Endothelial cell of umbilical vein (primary cell): ENCODE measurements at regions of chr14 and their contacts with region 1.

Region 1: DNA sequence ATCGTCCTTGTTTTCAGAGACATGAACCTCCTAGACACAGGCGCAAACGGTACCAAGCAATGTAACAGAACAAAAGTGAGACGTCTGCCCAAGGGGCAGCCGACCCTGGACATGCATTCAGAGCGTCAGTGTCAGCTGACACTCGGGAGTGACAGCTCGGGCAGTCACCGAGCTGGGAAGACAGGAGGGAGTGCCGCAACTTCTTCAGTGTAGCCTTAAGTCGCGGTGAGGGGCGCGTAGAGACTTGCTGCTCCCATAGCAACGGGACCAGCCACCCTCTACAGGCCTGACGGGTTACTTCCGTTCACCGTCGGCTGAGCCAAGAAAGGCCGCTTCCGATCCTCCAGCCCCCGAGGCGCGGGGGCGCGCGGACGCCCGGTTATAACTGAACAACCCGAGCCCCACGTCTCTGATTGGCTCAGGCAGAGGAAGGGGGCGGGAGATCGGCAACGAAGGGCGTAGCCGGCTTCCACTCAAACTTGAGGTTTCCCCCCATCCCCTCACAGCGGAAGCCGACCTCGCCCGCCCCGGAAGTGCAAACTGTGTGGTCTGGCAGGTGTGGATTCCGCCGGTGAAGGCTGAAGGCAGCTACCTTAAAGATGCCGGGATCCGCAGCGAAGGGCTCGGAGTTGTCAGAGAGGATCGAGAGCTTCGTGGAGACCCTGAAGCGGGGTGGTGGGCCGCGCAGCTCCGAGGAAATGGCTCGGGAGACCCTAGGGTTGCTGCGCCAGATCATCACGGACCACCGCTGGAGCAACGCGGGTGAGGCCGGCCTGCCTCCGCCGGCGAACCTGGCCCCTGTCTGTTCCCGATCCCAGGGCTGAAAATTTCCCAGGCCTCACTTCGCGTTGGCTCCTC is at the start of gene EIF2B2:
- DNase-seq: peak; percentile 96
- H3K4me3 ChIP-seq: peak within 1 kb of the TSS; percentile 43 to 76 (median 59)
- H3K27ac ChIP-seq: peak within 1 kb of the TSS; percentile 64
- H3K4me1 ChIP-seq: peaks cover 26% of the 10 kb centered on the region
- H3K27me3 ChIP-seq: no peaks in the 10 kb centered on the region
- CTCF ChIP-seq: no peak
- POLR2A ChIP-seq: peak; percentile 55
- total RNA-seq, gene EIF2B2: 97.0 and 103 TPM in 2 replicates

Region 2: DNA sequence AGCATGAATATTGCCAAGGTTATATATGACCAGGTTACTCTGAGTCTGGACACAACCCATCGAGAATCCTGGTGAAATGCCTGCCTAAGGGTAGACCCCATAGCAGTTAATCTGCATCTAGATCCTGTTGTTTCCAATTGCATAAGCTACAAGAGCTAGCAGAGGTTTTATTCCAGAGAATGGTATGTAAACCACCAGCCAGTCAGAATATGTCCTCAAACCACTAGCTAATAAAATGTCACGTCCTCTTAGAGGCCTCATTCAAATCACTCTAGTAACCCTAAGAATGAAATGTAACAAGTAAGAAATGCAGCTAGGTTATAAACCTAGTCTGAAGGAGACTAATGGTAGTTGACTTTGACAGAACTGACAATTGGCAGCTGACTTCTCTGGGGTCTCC is 248.5 kb before region 1 on chr14:
- CTCF ChIA-PET with region 1: no interaction called
- POLR2A ChIA-PET with region 1: no interaction called
- dilution Hi-C with region 1: no loop called
- intact Hi-C with region 1: no loop called
- DNase-seq: no peak
- H3K4me3 ChIP-seq: no peak overlapping the region
- H3K27ac ChIP-seq: no peak overlapping the region
- H3K4me1 ChIP-seq: no peaks in the 10 kb centered on the region
- H3K27me3 ChIP-seq: no peaks in the 10 kb centered on the region
- CTCF ChIP-seq: no peak
- POLR2A ChIP-seq: no peak

Region 3: DNA sequence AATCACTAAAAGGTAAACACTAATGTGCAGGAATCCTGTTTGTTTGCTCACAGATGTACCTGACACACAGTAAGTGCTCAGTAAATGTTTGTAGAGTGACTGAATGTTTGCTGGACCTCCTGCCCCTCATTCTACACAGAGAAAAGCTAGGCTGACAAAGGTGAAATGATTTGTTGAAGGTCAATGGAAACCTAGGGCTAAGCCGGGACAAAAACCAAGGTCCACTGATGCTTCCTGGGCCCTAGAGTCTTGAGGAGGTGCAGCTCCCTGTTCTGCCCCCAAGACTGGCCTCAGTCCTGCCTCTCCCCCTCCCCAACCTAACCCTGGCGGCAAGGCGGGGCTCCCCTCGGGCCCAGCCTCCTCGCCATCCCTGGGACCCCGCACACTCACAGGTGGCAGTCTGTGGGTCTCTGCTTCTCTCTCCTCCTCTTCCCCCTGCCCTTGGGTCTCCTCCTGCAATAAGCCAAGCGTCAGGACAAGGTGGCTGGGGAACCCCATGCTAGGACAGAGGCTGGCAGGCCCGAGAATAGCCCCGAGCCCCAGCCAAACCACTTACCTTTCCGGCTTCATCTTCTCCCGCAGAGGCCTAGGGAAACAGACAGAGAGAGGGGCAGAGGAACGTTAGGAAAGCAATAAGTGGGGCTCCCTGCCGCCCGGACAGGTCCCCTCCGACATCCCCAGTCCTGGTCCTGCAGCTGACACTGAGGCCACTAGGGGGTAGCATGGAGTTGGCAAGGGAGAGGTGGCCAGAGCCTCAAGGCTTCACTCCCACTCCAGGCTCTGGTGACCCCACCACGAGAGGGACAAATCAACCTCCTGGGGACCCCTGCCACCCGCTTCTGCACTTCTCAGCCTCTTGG is 56.6 kb before region 1 on chr14:
- CTCF ChIA-PET with region 1: interaction called, 23 read pairs
- POLR2A ChIA-PET with region 1: interaction called, 3 read pairs
- dilution Hi-C with region 1: no loop called
- intact Hi-C with region 1: loop called (anchors 2 kb)
- DNase-seq: peak; percentile 69
- H3K4me3 ChIP-seq: no peak overlapping the region
- H3K27ac ChIP-seq: peak overlapping the region; percentile 30
- H3K4me1 ChIP-seq: peaks cover 39% of the 10 kb centered on the region
- H3K27me3 ChIP-seq: no peaks in the 10 kb centered on the region
- CTCF ChIP-seq: peak; percentile 80 to 96
- POLR2A ChIP-seq: no peak

Region 4: DNA sequence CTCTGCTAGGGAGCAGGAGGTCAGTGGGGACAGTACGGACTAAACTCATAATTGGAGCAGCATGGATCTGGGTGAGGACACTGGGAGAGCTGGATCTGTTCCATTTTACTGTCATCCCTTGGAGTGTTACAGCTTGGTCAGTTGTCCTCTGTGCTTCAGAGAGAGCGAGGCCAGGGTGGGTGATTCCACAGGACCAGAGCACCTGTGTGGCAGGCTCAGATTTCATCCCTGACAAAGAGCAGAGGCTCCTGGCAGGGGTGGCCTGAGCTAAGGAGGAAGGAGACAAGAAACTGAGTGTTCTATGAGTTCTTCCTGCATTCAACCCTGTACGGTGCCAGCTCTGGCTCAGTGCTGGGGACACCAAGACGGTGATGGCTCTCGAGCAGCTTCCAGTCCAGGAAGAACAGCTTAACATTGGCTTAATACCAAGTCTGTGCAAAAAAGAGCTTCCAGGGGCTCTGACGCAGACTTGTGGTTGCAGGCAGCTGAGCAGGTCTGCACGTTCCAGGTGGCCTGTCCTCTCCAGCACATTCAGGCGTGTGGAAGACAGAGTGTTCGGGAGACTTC is 38.8 kb before region 1 on chr14:
- CTCF ChIA-PET with region 1: no interaction called
- POLR2A ChIA-PET with region 1: no interaction called
- dilution Hi-C with region 1: no loop called
- intact Hi-C with region 1: loop called (anchors 1 kb)
- DNase-seq: no peak
- H3K4me3 ChIP-seq: no peak overlapping the region
- H3K27ac ChIP-seq: peak overlapping the region; percentile 4
- H3K4me1 ChIP-seq: peaks cover 29% of the 10 kb centered on the region
- H3K27me3 ChIP-seq: no peaks in the 10 kb centered on the region
- CTCF ChIP-seq: no peak
- POLR2A ChIP-seq: no peak

Region 5: GRCh38 chr14:74973003-74973653 is 29.5 kb before region 1 on chr14:
- CTCF ChIA-PET with region 1: interaction called, 3 read pairs
- POLR2A ChIA-PET with region 1: interaction called, 3 read pairs
- dilution Hi-C with region 1: no loop called
- intact Hi-C with region 1: loop called (anchors 2 kb)
- DNase-seq: peak; percentile 84
- H3K4me3 ChIP-seq: no peak overlapping the region
- H3K27ac ChIP-seq: peak overlapping the region; percentile 62
- H3K4me1 ChIP-seq: peaks cover 23% of the 10 kb centered on the region
- H3K27me3 ChIP-seq: no peaks in the 10 kb centered on the region
- CTCF ChIP-seq: no peak
- POLR2A ChIP-seq: peak; percentile 17

Region 6: DNA sequence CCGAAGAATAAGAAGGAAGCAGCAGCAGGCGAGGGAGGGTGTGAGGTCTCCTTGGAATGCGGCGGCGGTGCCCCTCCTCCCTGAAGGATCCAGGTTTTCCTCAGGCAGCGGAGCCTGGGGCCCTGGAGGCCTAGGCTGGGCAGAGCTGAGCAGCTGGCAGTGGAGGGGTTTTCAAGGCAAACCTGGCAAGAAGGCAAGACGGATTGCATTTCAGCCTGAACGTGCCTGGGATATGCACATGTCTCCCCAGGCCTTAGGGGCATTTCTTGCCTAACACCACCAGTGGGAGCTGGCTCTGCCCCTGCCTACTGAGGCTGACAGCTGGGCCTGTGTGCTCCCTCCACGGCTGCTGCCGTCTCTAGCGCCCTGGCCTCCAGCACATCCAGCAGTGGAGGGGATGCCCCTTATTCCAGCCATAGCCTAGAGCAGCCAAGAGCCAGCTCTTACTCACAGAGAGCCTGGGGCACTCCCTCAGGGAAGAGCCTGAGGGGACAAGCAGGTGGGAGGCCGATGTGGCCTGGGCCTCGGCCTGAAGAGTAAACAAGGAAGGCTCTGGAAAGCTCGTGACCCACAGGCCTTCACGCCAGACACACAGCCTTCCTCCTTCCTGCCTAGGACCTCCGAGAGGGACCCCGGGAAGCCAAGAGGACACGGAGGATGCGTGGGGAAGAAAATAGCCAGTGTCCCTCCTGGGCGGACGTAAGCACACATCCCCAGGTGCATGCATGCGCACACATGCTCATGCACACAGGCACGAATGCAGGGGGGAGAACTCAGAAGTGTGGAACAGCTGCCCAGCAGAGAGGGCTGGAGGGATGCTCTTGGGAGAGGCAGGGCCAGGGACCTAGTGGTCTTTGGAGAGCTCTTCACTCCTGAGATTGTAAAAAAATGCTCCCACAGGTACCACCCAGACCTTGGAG is 22.9 kb before region 1 on chr14:
- CTCF ChIA-PET with region 1: interaction called, 9 read pairs
- POLR2A ChIA-PET with region 1: interaction called, 4 read pairs
- dilution Hi-C with region 1: no loop called
- intact Hi-C with region 1: loop called (anchors 1 kb)
- DNase-seq: peak; percentile 57
- H3K4me3 ChIP-seq: no peak overlapping the region
- H3K27ac ChIP-seq: peak overlapping the region; percentile 98
- H3K4me1 ChIP-seq: peaks cover 53% of the 10 kb centered on the region
- H3K27me3 ChIP-seq: no peaks in the 10 kb centered on the region
- CTCF ChIP-seq: peak in 1 of 2 donors; percentile 39
- POLR2A ChIP-seq: no peak

Region 7: DNA sequence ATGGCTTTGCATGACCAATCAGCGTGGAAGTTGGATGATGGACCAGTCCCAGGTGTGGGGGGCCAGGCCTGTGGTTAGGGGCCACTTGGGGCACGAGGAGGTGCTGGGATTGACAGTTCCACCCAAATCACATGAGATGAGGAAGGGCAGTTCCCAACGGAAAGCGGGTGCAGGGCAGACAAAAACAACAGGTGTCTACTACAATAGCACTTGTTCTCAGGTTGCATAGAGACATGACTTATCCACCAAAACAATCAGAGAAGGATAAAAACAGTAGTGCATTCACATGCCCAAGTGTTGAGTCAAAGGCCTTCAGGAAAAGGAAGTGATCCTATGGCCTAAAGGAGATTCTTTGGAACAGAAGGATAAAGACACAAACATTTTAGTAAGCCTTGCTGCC is 14.5 kb before region 1 on chr14:
- CTCF ChIA-PET with region 1: interaction called, 3 read pairs
- POLR2A ChIA-PET with region 1: interaction called, 4 read pairs
- dilution Hi-C with region 1: no loop called
- intact Hi-C with region 1: loop called (anchors 1 kb)
- DNase-seq: peak; percentile 97
- H3K4me3 ChIP-seq: no peak overlapping the region
- H3K27ac ChIP-seq: peak overlapping the region; percentile 99
- H3K4me1 ChIP-seq: peaks cover 39% of the 10 kb centered on the region
- H3K27me3 ChIP-seq: no peaks in the 10 kb centered on the region
- CTCF ChIP-seq: no peak
- POLR2A ChIP-seq: no peak

Region 8: GRCh38 chr14:75069045-75069810 is 66.6 kb after region 1 on chr14 and contains the start of gene ZC2HC1C:
- CTCF ChIA-PET with region 1: interaction called, 4 read pairs
- POLR2A ChIA-PET with region 1: no interaction called
- dilution Hi-C with region 1: no loop called
- intact Hi-C with region 1: loop called (anchors 5 kb)
- DNase-seq: peak; percentile 91
- H3K4me3 ChIP-seq: peak within 1 kb of the TSS; percentile 31 to 69 (median 59)
- H3K27ac ChIP-seq: peak within 1 kb of the TSS; percentile 86
- H3K4me1 ChIP-seq: peaks cover 14% of the 10 kb centered on the region
- H3K27me3 ChIP-seq: no peaks in the 10 kb centered on the region
- CTCF ChIP-seq: no peak
- POLR2A ChIP-seq: peak; percentile 77
- total RNA-seq, gene ZC2HC1C: 0.91 and 3.6 TPM in 2 replicates